ENCODE measurements at regions of chr18 and their contacts with region 1.

Region 1: DNA sequence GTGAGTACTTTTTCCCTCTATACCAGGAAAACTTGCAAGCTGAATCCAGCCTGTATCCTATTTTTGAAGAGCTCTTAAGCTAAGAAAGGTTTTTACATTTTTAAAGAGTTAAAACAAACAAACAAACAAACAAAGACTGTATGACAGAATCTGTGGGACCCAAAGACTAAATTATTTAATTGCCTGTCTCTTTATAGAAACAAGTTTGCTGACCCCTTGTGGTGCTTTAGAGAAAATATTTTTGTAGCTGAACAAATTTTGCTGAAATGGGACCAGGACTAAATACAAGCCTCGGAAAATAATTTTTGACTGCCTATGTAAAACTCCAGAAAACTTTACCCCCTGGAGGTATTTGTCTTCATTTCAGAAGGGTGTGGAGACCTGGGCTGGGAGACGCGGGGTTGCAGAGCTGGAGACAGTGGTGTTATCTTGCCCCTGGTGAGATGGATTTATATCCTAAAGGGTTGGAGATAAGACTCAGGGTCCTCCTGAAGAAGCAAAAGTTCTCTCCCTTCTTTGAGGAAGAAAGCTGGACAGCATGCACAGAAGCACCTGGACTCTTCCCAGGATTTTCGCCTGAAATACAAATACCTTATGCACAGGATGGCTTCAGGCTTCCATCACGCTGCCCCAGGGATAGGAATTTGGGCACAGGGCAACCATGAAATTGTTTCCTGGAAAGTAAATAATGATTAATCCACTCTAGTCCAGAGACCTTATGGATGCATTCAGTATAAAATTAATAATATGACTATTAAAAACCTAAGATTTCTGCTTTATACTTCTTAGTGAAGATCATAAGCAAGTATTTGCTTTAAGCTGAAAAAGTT is 54.3 kb downstream of the TMX3 start:
- DNase-seq: peak in 1 of 4 donors; percentile 41
- ATAC-seq: peak; percentile 57
- H3K4me3 ChIP-seq: no peak overlapping the region
- H3K27ac ChIP-seq: no peak overlapping the region
- H3K4me1 ChIP-seq: no peaks in the 10 kb centered on the region
- H3K27me3 ChIP-seq: no peaks in the 10 kb centered on the region
- CTCF ChIP-seq: peak; percentile 29 to 43

Region 2: DNA sequence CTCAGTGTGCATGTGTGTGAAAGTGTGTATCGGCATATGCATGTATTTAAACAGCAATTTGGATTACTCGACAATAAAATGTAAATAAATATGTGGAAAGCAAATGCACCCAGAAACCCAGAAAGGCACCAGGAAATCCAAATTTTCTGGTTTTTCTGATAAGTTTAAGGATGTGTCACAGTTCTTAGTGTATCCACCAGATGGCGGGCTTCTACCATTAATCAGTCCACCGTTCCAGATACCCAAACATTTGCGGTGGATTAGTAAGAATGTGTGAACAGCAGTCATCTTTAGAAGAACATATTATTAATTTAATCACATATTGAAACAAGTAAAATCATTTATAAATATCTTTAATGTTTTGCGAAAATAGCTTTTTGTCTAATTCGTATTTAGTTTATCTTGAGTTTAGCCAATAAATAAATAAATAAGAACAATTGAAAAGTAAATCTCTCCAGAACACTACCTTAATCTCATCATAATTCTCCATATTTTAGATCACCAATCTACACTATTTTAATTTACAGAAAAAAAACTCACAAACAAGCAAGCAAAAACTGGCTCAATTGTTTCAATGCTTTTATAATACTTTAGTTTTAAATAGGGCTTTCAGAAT is 1442.9 kb before region 1 on chr18:
- intact Hi-C with region 1: loop called in 1 of 2 experiments (anchors 10 kb)
- DNase-seq: peak in 2 of 4 donors; percentile 40 to 65
- ATAC-seq: peak; percentile 91
- H3K4me3 ChIP-seq: no peak overlapping the region
- H3K27ac ChIP-seq: no peak overlapping the region
- H3K4me1 ChIP-seq: no peaks in the 10 kb centered on the region
- H3K27me3 ChIP-seq: no peaks in the 10 kb centered on the region
- CTCF ChIP-seq: peak; percentile 60 to 78